CD8-positive, alpha-beta T cell (primary cell): ENCODE measurements at regions of chr18 and their contacts with region 1.

Region 1: DNA sequence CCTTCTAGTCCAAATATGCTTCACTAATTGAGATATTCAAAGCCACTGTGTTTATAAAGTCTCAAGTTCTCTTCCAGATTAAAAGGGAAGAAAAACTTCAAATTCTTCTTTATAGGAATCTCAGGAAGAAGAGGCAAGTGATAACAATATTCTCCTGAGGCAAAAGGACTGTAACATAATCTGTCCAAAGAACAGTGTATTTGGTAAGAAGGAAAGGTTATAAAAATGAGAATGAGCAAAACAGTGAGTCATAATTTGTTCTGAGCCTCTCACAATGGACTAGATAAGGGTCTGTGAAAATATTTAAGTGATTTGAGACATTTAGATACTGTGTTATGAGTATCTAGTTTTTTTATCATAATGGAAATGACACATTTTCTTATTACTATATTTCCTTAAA is 44.3 kb downstream of the SNRPD1 start:
- DNase-seq: no peak
- ATAC-seq: no peak
- H3K4me3 ChIP-seq: no peak overlapping the region
- H3K4me3 Mint-ChIP-seq: no peak overlapping the region
- H3K27ac ChIP-seq: no peak overlapping the region
- H3K27ac Mint-ChIP-seq: no peak overlapping the region
- H3K4me1 ChIP-seq: no peaks in the 10 kb centered on the region
- H3K4me1 Mint-ChIP-seq: no peaks in the 10 kb centered on the region
- H3K27me3 ChIP-seq: no peaks in the 10 kb centered on the region
- H3K27me3 Mint-ChIP-seq: no peaks in the 10 kb centered on the region
- CTCF ChIP-seq: no peak

Region 2: GRCh38 chr18:21444465-21445023 is 211.9 kb before region 1 on chr18:
- CTCF ChIA-PET with region 1: no interaction called
- POLR2A ChIA-PET with region 1: no interaction called
- intact Hi-C with region 1: no loop called
- DNase-seq: peak in 1 of 9 experiments; percentile 13
- ATAC-seq: no peak
- H3K4me3 ChIP-seq: no peak overlapping the region
- H3K4me3 Mint-ChIP-seq: no peak overlapping the region
- H3K27ac ChIP-seq: no peak overlapping the region
- H3K27ac Mint-ChIP-seq: no peak overlapping the region
- H3K4me1 ChIP-seq: no peaks in the 10 kb centered on the region
- H3K4me1 Mint-ChIP-seq: no peaks in the 10 kb centered on the region
- H3K27me3 ChIP-seq: peaks cover 0 to 2% of the 10 kb centered on the region in 2 experiments
- H3K27me3 Mint-ChIP-seq: peaks cover 16% of the 10 kb centered on the region
- CTCF ChIP-seq: no peak

Region 3: DNA sequence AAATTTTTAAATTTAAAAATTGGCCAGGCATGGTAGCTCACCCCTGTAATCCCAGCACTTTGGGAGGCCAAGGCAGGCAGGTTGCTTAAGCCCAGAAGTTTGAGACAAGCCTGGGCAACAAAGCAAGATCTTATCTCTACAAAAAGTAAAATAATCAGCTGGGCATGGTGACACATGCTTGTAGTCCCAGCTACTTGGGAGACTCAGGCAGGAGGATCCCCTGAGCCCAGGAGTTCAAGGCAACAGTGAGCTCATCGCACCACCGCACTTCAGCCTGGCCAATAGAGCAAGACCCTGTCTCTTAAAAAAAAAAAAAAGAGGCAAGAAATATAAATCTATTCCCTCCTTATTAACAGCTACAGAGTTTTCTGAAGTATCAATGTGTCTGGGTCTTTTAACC is 107.8 kb before region 1 on chr18:
- CTCF ChIA-PET with region 1: no interaction called
- POLR2A ChIA-PET with region 1: no interaction called
- intact Hi-C with region 1: loop called in 1 of 2 experiments (anchors 10 kb)
- DNase-seq: no peak
- ATAC-seq: no peak
- H3K4me3 ChIP-seq: no peak overlapping the region
- H3K4me3 Mint-ChIP-seq: no peak overlapping the region
- H3K27ac ChIP-seq: no peak overlapping the region
- H3K27ac Mint-ChIP-seq: no peak overlapping the region
- H3K4me1 ChIP-seq: no peaks in the 10 kb centered on the region
- H3K4me1 Mint-ChIP-seq: peaks cover 4% of the 10 kb centered on the region
- H3K27me3 ChIP-seq: no peaks in the 10 kb centered on the region
- H3K27me3 Mint-ChIP-seq: no peaks in the 10 kb centered on the region
- CTCF ChIP-seq: no peak

Region 4: GRCh38 chr18:21703241-21703820 is 46.9 kb after region 1 on chr18:
- CTCF ChIA-PET with region 1: no interaction called
- POLR2A ChIA-PET with region 1: no interaction called
- intact Hi-C with region 1: no loop called
- DNase-seq: peak in 6 of 9 experiments; percentile 5 to 62 (median 38)
- ATAC-seq: peak; percentile 0
- H3K4me3 ChIP-seq: peak overlapping the region; percentile 81 to 99
- H3K4me3 Mint-ChIP-seq: peak overlapping the region; percentile 96
- H3K27ac ChIP-seq: peak overlapping the region; percentile 66 to 82
- H3K27ac Mint-ChIP-seq: peak overlapping the region; percentile 94
- H3K4me1 ChIP-seq: peaks cover 20% of the 10 kb centered on the region
- H3K4me1 Mint-ChIP-seq: peaks cover 35% of the 10 kb centered on the region
- H3K27me3 ChIP-seq: no peaks in the 10 kb centered on the region
- H3K27me3 Mint-ChIP-seq: no peaks in the 10 kb centered on the region
- CTCF ChIP-seq: no peak